Activated CD8-positive, alpha-beta T cell treated with anti-CD3 and anti-CD28 coated beads, Interleukin-2, amount 10 ng/mL, durations not matched to agents 7 days and 5 days (primary cell): ENCODE measurements at regions of chr21 and their contacts with region 1.

Region 1: DNA sequence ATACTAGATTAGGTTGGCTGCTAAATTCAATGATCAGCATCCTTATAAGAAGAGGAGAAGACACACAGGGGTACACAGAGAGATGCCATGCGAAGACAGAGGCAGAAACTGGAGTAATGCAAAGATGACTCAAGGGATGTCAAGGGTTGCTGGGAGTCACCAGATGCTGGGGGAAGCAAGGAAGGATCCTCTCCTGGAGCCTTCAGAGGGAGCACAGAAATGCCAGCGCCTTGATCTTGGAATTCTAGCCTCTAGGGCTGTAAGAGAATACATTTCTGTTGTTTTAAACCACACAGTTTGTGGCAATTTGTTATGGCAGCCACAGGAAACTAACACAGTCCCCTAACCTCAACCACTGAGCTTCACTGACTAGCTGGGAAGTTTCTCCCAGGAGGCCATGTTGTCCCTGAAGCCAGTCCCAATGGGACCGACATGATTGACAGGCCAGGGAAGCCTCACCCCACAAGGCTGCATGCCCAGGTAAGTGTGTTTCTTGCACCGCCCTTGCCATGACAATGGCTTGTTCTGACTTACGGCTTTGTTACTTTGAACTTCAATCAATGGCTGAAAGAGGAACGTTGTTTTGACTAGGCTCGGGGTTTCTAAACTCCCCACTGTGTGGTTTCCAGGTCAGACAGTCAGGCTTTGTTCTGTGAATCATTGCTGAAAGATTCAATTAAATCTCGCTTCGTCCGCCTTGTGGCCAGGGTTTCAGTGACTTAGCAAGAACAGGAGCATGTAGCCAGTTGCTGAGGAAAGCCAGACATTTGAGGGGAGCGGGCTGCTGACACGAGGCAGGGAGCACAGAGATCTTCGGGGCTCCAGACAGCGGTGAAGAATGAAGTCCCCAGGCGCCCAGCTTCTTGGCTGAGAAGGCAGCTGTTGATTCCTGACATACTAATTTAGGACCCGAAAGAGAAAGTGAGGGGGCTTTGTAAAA is 62.3 kb downstream of the RUNX1 start:
- DNase-seq: peak; percentile 84
- ATAC-seq: peak; percentile 70
- H3K4me3 Mint-ChIP-seq: peak overlapping the region; percentile 46
- H3K27ac Mint-ChIP-seq: peak overlapping the region; percentile 28
- H3K4me1 Mint-ChIP-seq: peaks cover 79% of the 10 kb centered on the region
- H3K27me3 Mint-ChIP-seq: peaks cover 28% of the 10 kb centered on the region

Region 2: DNA sequence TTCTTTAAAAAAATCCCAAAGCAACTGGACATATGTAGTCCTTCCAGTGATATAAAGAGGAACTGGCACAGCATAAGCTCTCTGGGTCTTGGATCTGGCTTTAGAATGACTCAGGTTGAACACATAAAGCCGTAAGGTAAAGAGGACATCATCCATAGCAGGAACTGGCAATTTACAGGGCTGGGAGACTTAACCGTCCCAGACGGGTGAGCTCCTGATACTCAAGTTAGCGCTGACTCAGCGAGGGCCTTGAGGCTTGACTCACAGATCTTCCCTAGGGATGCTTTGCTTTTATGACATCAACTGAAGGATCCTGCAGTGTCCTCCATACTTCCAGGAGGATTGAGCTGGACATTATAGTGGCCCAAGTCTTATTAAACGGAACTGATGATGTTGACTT is 163.9 kb before region 1 on chr21:
- CTCF ChIA-PET with region 1: no interaction called
- POLR2A ChIA-PET with region 1: no interaction called
- DNase-seq: no peak
- ATAC-seq: no peak
- H3K4me3 Mint-ChIP-seq: no peak overlapping the region
- H3K27ac Mint-ChIP-seq: no peak overlapping the region
- H3K4me1 Mint-ChIP-seq: peaks cover 6% of the 10 kb centered on the region
- H3K27me3 Mint-ChIP-seq: no peaks in the 10 kb centered on the region

Region 3: DNA sequence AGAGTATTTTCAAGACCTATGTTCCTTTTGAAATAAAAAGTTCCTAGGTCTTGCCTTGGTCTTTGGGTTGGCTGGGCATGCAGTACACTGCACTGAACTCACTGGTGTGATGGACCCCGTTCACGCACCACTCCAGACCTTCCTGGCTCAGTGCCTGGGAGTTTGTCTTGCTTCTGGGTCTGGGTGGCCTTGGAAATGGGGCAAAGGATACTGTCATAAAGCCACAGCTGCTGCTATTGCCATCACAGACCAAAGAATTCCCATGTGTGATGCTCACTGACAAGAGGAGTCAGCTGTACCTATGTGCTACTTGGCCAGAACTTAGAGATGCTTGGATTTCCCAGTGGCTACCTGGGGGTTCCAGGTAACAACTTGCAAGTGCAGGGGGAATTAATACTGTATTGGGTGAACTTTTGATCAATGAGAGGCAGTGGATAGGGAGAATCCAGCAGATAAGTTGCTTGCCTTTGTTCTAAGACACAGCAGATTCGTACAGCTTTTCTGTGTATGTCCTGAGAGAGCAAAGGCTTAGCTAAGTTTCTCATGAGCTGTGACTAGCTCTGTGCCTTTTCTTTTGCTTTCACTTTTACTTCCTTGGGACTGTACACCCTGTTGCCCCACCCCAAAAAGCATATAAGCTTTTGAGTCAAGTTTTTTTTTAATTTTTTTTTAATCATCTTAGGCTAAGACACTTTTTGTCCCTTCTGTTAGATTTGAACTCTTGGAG is 53.1 kb before region 1 on chr21:
- CTCF ChIA-PET with region 1: interaction called, 20 read pairs
- POLR2A ChIA-PET with region 1: interaction called, 6 read pairs
- DNase-seq: peak; percentile 49
- ATAC-seq: peak; percentile 92
- H3K4me3 Mint-ChIP-seq: peak overlapping the region; percentile 73
- H3K27ac Mint-ChIP-seq: peak overlapping the region; percentile 93
- H3K4me1 Mint-ChIP-seq: peaks cover 59% of the 10 kb centered on the region
- H3K27me3 Mint-ChIP-seq: no peaks in the 10 kb centered on the region

Region 4: GRCh38 chr21:34974162-34974981 is 12.5 kb before region 1 on chr21:
- CTCF ChIA-PET with region 1: interaction called, 19 read pairs
- POLR2A ChIA-PET with region 1: interaction called, 10 read pairs
- DNase-seq: peak; percentile 65
- ATAC-seq: peak; percentile 91
- H3K4me3 Mint-ChIP-seq: peak overlapping the region; percentile 38
- H3K27ac Mint-ChIP-seq: peak overlapping the region; percentile 77
- H3K4me1 Mint-ChIP-seq: peaks cover 46% of the 10 kb centered on the region
- H3K27me3 Mint-ChIP-seq: peaks cover 56% of the 10 kb centered on the region

Region 5: GRCh38 chr21:35026617-35027562 is 40.1 kb after region 1 on chr21:
- CTCF ChIA-PET with region 1: interaction called, 15 read pairs
- POLR2A ChIA-PET with region 1: interaction called, 14 read pairs
- DNase-seq: peak; percentile 91
- ATAC-seq: peak; percentile 93
- H3K4me3 Mint-ChIP-seq: peak overlapping the region; percentile 79
- H3K27ac Mint-ChIP-seq: peak overlapping the region; percentile 99
- H3K4me1 Mint-ChIP-seq: peaks cover 63% of the 10 kb centered on the region
- H3K27me3 Mint-ChIP-seq: peaks cover 3% of the 10 kb centered on the region